ENCODE measurements at regions of chr6 and their contacts with region 1.

Region 1: DNA sequence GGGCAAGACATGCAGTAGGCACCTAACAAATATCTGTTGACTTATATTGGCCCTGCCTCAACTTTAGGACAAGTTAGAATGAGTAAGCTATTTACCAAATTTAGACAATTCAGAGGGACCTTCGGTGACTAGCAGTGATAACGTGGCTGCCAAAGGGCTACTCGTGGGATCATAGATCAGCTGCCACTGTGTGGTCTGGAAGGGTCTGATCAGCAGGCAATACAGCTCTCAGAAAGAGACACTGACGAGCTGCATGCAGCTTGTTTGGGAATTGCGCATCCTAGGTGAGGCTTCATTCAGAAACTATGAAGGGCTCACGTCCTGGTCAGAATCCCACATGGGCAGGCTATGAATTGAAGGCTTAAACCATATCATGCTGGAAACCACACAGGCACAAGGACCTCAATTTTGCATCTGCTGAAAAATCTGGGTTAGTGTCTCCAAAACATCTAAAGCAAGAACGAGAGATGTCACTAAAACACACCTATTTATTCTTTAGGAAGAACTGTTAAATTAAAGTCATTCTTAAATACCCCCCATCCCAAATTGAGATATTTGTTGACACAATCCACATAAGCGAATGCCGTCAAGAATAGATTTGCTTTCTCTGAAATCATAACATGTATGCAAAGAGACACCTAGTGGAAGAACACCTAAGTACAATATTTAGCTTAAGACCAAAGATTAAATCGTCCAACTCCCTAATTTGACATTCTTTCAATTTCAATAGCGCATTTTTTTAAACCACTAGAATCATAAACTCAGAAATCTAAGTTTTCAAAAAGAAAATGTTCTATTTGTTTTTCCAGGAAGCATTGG is 79.6 kb downstream of the IPCEF1 start:
- DNase-seq: no peak
- H3K4me3 ChIP-seq: no peak overlapping the region
- H3K27me3 ChIP-seq: no peaks in the 10 kb centered on the region
- CTCF ChIP-seq: peak; percentile 50

Region 2: DNA sequence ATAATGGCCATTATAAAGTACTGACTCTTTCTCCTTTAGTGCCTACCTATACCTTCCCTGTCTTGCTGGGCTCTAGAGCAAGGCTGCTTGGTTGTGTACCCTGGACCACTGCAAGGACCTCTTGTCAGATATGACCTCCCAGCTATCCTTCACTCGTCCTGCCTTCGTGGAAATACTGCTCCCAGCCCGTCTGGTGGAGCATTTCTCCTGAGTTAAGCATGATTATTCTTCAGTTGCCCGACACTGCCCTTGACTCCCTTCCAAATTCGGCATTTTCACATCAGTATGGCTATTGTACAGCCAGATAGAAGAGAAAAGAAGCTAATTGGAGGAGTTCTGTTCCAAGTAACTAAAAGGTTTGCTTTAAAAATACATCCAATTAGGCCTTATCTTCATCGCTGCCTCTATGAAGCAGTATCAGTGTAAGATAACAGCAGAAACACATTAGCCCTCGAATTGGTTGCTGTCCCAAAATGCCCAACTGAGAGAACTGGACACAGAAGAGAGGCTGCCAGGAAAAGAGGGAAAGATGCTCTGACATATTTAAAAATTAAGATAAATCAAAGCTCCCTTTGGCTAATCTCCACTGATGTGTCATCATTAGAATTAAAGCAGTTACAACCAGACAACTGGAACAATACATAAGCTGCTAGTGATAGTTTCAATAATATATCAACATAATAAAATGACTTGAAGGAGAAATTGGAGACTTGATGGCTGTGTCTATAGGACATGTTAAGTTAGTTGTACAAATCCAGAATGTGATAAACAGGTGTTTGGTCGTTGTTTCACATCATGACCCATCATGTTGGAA is 183.6 kb before region 1 on chr6:
- CTCF ChIA-PET with region 1: no interaction called
- POLR2A ChIA-PET with region 1: no interaction called
- DNase-seq: no peak
- H3K4me3 ChIP-seq: no peak overlapping the region
- H3K27me3 ChIP-seq: no peaks in the 10 kb centered on the region
- CTCF ChIP-seq: no peak

Region 3: GRCh38 chr6:154213782-154214181 is 63.2 kb before region 1 on chr6:
- CTCF ChIA-PET with region 1: no interaction called
- POLR2A ChIA-PET with region 1: no interaction called
- DNase-seq: no peak
- H3K4me3 ChIP-seq: no peak overlapping the region
- H3K27me3 ChIP-seq: no peaks in the 10 kb centered on the region
- CTCF ChIP-seq: no peak

Region 4: DNA sequence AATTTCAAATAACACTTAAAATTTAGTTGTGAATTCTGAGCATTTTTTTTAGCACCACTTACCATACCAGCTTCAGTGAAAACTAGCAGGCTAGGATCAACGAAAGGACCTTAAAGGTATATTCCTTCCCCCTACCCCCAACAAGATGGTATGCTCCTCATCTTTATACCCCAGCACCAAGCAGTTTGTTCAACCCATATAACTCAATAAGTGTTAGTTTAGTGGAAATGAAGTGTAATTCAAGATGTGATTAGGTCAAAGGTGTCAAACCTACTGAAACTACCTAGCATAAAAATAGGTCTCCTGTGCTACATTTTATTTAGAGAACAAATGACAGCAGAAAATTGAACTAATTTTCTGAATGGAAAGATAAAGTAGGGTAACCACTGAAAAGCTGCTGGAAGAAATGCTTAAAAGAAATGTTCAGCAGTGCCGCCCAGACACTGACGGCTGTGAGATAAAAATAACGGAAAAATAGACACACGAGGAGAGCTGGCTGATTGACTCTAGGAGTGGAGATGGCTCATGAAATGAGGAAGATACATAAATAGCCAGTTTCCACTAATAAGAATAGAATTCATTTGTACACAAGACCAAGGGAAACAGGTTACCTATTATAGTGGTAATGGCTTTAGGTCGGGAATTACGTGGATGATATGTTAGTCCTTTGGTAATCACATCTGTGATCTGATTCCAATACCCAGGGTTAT is 15.2 kb before region 1 on chr6:
- CTCF ChIA-PET with region 1: interaction called, 13 read pairs
- POLR2A ChIA-PET with region 1: no interaction called
- DNase-seq: no peak
- H3K4me3 ChIP-seq: no peak overlapping the region
- H3K27me3 ChIP-seq: no peaks in the 10 kb centered on the region
- CTCF ChIP-seq: no peak

Region 5: GRCh38 chr6:154350293-154350692 is 73.3 kb after region 1 on chr6:
- CTCF ChIA-PET with region 1: no interaction called
- POLR2A ChIA-PET with region 1: no interaction called
- DNase-seq: no peak
- H3K4me3 ChIP-seq: no peak overlapping the region
- H3K27me3 ChIP-seq: peaks cover 1% of the 10 kb centered on the region; the same call in 1 of the 2 replicates
- CTCF ChIP-seq: no peak

Measured in BJ (cell line).